ENCODE measurements at regions of chr16 and their contacts with region 1.

Region 1: DNA sequence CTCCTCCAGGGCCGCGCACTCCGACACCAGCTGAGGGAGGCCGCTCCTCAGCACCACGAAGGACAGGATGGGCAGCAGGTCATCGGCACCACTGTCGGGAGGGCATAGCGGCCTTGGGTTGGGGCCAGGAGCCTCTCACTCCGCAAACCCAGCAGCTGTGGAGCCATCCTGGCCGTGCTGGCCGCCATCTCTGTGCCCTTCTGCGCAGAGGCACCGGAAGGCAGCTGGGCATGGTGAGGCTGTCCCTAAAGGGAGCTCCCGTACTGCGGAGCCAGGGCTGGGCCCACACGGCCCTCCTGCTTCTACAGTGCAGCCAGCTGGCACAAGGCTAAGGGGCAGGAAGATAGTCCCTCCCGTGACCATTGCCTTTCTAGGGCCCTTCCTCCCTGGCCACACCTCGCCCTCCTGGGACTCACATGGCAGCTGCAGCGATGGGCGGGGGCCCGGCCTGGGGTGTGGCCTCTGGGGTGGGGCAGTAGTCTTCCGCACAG is 7.0 kb upstream of the SPATA2L start:
- DNase-seq: peak; percentile 77
- H3K4me3 ChIP-seq: no peak overlapping the region
- H3K27ac ChIP-seq: no peak overlapping the region
- H3K4me1 ChIP-seq: peaks cover 5% of the 10 kb centered on the region
- H3K27me3 ChIP-seq: no peaks in the 10 kb centered on the region
- CTCF ChIP-seq: no peak

Region 2: DNA sequence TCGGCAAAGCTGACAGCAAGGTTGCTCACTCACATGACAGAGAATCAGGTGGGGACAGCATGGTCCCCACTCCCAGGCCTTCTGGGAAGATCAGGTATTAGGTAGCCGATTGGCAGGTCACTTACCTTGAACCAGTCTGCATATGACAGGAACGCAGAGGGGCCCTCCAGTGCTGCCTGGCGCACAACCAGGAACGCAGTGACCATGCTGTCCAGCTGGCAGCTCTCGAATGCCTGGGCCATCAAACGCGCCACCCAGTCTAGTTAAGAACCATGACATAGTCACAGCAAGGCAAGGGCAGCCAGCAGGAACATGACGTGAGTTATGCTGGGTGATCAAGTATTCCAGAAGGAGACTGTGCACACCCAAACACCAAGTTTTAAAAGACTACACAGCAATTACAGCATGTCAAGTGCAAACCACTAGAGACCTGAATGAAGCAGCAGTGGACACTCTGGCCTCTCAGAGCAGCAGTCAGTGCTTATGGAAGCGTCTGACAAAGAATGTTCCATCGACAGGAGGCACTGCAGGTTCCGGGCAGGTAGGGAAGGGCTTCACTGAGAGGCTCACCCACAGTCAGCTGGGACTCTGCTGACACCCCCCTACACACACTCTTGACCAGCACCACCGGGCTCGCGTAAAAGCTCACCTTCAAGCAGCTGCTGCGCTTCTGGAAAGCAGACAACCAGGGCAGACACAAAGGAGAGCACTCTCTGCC is 83.0 kb after region 1 on chr16:
- intact Hi-C with region 1: loop called (anchors 5 kb)
- DNase-seq: no peak
- H3K4me3 ChIP-seq: no peak overlapping the region
- H3K27ac ChIP-seq: no peak overlapping the region
- H3K4me1 ChIP-seq: no peaks in the 10 kb centered on the region
- H3K27me3 ChIP-seq: no peaks in the 10 kb centered on the region
- CTCF ChIP-seq: no peak